ENCODE measurements at regions of chr6 and their contacts with region 1.

Region 1: DNA sequence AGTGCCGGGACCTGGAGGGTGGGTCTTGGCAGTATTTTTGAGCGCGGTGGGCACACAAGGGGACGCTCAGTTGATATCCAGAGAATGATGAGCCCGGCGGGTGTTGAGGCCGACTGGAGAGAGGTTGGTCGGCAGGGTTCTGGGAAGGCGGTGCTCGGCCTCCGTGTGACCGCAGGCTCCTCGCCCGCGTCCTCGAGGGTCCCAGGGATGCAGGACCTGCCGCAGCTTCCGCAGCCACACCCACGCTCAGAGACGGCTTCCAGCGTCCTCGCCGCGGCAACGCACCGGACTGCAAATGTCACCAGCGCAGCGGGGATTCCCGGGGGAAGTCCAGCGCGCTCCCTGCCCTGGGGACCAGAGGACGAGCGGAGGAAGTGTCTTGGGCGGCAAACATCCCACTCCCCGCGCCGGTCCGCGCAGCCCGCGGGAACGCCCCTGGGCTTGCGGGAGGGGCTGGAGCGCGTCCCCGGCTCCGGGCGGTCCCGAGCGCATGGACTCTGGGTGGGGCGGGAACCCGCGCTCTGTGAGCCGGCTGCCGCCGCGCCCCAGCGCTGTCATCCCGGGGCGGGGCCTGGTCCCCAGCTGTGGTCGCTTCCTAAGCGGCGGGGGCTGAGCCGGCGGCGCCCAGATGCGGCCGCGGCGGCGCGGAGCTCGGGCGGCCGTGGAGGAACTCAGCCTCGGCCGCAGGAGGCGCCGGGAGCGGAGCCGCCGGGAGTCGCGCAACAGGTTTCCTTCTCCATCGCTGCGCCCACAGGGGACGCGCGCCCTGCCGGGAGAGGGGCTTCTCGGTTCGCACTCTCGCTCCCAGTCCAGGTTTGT is at the start of gene STX11:
- DNase-seq: peak; percentile 78
- H3K4me3 Mint-ChIP-seq: peak within 1 kb of the TSS; percentile 91
- H3K27ac Mint-ChIP-seq: peak within 1 kb of the TSS; percentile 98
- H3K4me1 Mint-ChIP-seq: peaks cover 63% of the 10 kb centered on the region
- H3K27me3 Mint-ChIP-seq: peaks cover 1% of the 10 kb centered on the region
- total RNA-seq, gene STX11: 24.2 and 24.7 TPM in 2 replicates

Region 2: GRCh38 chr6:143450453-143451371 is 699.4 kb before region 1 on chr6 and contains the starts of genes ADAT2 and PEX3:
- intact Hi-C with region 1: loop called (anchors 10 kb)
- DNase-seq: peak; percentile 92
- H3K4me3 Mint-ChIP-seq: peak within 1 kb of the TSS; percentile 98
- H3K27ac Mint-ChIP-seq: peak within 1 kb of the TSS; percentile 99
- H3K4me1 Mint-ChIP-seq: peaks cover 50% of the 10 kb centered on the region
- H3K27me3 Mint-ChIP-seq: no peaks in the 10 kb centered on the region
- total RNA-seq, gene ADAT2: 39.0 and 43.6 TPM in 2 replicates
- total RNA-seq, gene PEX3: 23.6 and 25.0 TPM in 2 replicates

Region 3: GRCh38 chr6:143510991-143511891 is 638.9 kb before region 1 on chr6 and contains the start of gene FUCA2:
- intact Hi-C with region 1: no loop called
- DNase-seq: peak; percentile 64
- H3K4me3 Mint-ChIP-seq: peak within 1 kb of the TSS; percentile 95
- H3K27ac Mint-ChIP-seq: peak within 1 kb of the TSS; percentile 96
- H3K4me1 Mint-ChIP-seq: peaks cover 39% of the 10 kb centered on the region
- H3K27me3 Mint-ChIP-seq: no peaks in the 10 kb centered on the region
- total RNA-seq, gene FUCA2: 15.7 and 16.3 TPM in 2 replicates

Region 4: GRCh38 chr6:144055121-144055931 is 94.8 kb before region 1 on chr6:
- intact Hi-C with region 1: loop called (anchors 1 kb)
- DNase-seq: peak; percentile 37
- H3K4me3 Mint-ChIP-seq: peak overlapping the region; percentile 83
- H3K27ac Mint-ChIP-seq: peak overlapping the region; percentile 98
- H3K4me1 Mint-ChIP-seq: peaks cover 48% of the 10 kb centered on the region
- H3K27me3 Mint-ChIP-seq: no peaks in the 10 kb centered on the region

Region 5: DNA sequence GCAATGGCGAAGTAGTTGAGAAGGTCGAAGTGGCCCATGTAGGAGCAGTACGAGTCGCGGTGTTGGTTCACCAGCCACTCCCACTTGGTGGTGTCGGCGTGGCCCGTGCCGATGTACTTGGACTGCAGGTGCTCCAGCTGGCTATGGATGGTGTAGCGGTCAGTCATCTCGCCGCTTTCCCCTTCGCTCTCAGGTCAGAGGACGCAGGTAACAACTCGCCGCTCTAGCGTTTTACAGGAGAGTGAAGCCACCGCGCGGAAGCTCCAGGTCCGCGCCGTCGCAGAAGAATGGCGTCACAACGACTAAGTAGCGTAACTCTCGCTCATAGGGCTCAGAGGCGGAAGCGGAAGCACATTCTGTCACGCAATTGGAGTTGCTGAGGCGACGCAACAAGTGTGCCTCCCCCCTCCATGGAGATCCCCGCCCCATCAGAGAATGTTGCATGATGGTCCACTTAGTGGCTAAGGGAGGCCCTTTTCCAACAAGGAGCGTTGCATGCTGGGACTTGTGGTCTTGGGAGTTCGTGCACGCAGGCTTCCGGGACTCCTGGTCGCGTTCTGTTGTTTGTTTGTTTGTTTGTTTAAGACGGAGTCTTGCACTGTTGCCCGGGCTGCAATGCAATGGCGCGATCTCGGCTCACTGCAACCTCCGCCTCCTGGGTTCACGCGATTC is 54.6 kb before region 1 on chr6 and contains the start of gene SF3B5:
- intact Hi-C with region 1: loop called (anchors 1 kb)
- DNase-seq: peak; percentile 96
- H3K4me3 Mint-ChIP-seq: peak within 1 kb of the TSS; percentile 96
- H3K27ac Mint-ChIP-seq: peak within 1 kb of the TSS; percentile 98
- H3K4me1 Mint-ChIP-seq: peaks cover 39% of the 10 kb centered on the region
- H3K27me3 Mint-ChIP-seq: no peaks in the 10 kb centered on the region
- total RNA-seq, gene SF3B5: 204 and 232 TPM in 2 replicates

Region 6: GRCh38 chr6:144131248-144131709 is 18.8 kb before region 1 on chr6:
- intact Hi-C with region 1: loop called (anchors 1 kb)
- DNase-seq: no peak
- H3K4me3 Mint-ChIP-seq: no peak overlapping the region
- H3K27ac Mint-ChIP-seq: peak overlapping the region; percentile 93
- H3K4me1 Mint-ChIP-seq: peaks cover 16% of the 10 kb centered on the region
- H3K27me3 Mint-ChIP-seq: no peaks in the 10 kb centered on the region

Region 7: DNA sequence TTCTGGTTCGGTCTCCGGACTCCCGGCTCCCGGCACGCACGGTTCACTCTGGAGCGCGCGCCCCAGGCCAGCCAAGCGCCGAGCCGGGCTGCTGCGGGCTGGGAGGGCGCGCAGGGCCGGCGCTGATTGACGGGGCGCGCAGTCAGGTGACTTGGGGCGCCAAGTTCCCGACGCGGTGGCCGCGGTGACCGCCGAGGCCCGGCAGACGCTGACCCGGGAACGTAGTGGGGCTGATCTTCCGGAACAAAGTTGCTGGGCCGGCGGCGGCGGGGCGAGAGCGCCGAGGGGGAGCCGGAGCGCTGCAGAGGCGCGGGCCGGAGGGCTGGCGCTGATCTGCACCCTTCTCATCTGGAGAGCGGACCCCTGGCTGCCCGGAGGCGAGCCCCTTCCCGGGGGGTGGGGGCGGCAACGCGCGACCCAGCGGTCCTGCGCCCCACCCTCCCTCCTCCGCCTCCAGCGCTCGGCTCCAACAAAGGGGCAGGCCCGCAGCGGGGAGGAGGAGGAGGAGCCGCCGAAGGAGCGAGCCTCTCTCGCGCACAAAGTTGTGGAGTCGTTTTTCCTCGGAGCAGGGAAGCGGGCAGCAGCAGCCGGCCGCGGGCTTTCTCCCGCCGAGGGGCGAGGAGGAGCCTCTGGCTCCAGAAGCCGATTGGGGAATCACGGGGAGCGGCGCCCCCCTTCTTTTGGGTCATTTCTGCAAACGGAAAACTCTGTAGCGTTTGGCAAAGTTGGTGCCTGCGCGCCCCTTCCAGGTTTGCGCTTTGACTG is 134.9 kb after region 1 on chr6 and contains the start of gene UTRN:
- intact Hi-C with region 1: loop called (anchors 2 kb)
- DNase-seq: peak; percentile 29
- H3K4me3 Mint-ChIP-seq: peak within 1 kb of the TSS; percentile 93
- H3K27ac Mint-ChIP-seq: peak within 1 kb of the TSS; percentile 64
- H3K4me1 Mint-ChIP-seq: peaks cover 19% of the 10 kb centered on the region
- H3K27me3 Mint-ChIP-seq: peaks cover 33% of the 10 kb centered on the region
- total RNA-seq, gene UTRN: 48.3 and 50.6 TPM in 2 replicates

Region 8: GRCh38 chr6:144482142-144482541 is 332.0 kb after region 1 on chr6:
- intact Hi-C with region 1: loop called (anchors 1 kb)
- DNase-seq: peak; percentile 48
- H3K4me3 Mint-ChIP-seq: no peak overlapping the region
- H3K27ac Mint-ChIP-seq: no peak overlapping the region
- H3K4me1 Mint-ChIP-seq: peaks cover 15% of the 10 kb centered on the region
- H3K27me3 Mint-ChIP-seq: no peaks in the 10 kb centered on the region